A673 (cell line): ENCODE measurements at regions of chr5 and their contacts with region 1.

Region 1: GRCh38 chr5:5419294-5420210 is 2.9 kb upstream of the ICE1 start:
- DNase-seq: peak; percentile 71
- H3K4me3 ChIP-seq: no peak overlapping the region
- H3K27ac ChIP-seq: no peak overlapping the region
- H3K4me1 ChIP-seq: peaks cover 7% of the 10 kb centered on the region
- H3K27me3 ChIP-seq: no peaks in the 10 kb centered on the region
- CTCF ChIP-seq: peak; percentile 85

Region 2: GRCh38 chr5:4868109-4868735 is 551.3 kb before region 1 on chr5:
- CTCF ChIA-PET with region 1: interaction called, 3 read pairs
- POLR2A ChIA-PET with region 1: no interaction called
- intact Hi-C with region 1: loop called (anchors 1 kb)
- DNase-seq: peak; percentile 66
- H3K4me3 ChIP-seq: no peak overlapping the region
- H3K27ac ChIP-seq: no peak overlapping the region
- H3K4me1 ChIP-seq: no peaks in the 10 kb centered on the region
- H3K27me3 ChIP-seq: peaks cover 23% of the 10 kb centered on the region
- CTCF ChIP-seq: peak; percentile 88

Region 3: DNA sequence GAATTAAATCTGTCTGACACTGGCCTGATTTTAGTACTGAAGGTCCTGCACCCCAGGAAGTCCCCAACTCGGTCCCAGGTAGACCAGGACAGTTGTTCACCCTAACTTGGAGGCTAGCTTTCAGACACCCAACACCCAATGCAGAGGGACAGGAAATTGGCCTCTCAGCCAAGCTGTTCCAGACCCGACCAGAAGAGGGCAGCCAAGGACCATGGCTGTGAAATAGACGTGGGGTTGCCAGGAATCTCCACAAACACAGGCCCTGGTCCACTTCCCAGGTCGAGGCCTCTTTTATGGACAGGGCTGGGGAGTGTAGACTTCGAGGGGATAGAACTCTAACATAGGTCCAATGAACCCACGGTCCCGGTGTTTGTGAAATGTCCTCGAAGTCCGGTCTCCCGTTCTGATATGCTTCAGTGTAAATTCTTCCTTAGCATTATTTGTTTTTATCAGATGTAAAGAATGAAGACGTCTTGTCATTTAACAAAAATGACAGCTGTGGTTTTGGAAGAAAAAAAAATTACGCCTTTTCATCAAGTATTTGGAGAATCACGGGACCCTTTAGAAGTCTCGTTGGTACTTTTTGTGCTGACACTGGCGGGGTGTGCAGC is 539.8 kb before region 1 on chr5:
- CTCF ChIA-PET with region 1: interaction called, 3 read pairs
- POLR2A ChIA-PET with region 1: no interaction called
- intact Hi-C with region 1: loop called (anchors 1 kb)
- DNase-seq: peak; percentile 68
- H3K4me3 ChIP-seq: no peak overlapping the region
- H3K27ac ChIP-seq: no peak overlapping the region
- H3K4me1 ChIP-seq: no peaks in the 10 kb centered on the region
- H3K27me3 ChIP-seq: peaks cover 11% of the 10 kb centered on the region
- CTCF ChIP-seq: peak; percentile 89

Region 4: GRCh38 chr5:5079876-5080275 is 339.7 kb before region 1 on chr5:
- CTCF ChIA-PET with region 1: interaction called, 11 read pairs
- POLR2A ChIA-PET with region 1: no interaction called
- intact Hi-C with region 1: no loop called
- DNase-seq: no peak
- H3K4me3 ChIP-seq: no peak overlapping the region
- H3K27ac ChIP-seq: no peak overlapping the region
- H3K4me1 ChIP-seq: no peaks in the 10 kb centered on the region
- H3K27me3 ChIP-seq: peaks cover 80% of the 10 kb centered on the region
- CTCF ChIP-seq: no peak

Region 5: DNA sequence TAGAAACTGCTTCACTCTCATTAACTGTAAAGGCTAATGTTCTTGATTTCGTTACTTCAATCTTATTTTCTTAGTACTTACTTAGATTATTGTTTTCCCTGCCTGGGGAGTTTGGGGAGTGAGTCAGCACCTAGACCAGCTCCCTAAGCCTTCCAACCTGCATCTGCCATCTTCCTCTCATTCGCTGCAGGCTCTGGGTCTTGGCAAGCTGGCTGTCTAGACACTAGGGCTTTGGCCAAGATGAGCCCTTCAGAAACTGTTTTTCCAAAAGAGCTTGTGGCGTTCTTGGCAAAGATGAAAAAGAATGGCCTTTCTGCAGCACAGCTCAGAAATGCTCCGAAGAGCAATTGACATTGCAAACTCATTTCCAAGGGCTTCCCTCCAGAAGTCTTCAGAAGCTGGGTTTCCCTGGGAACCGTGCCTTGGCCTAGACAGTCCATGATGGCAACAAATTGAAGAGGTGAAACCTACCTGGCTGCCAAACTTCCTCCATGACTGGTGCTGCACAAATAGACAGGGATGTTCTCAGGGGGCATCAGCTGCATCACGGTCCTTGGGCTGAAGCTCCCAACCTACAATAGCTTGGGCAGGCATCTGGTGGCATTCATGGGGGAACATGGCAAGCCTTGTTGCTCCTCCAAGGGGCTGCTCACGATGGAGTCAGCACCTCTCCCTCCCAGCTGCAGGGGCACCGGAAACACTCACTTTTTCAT is 1136.7 kb after region 1 on chr5:
- CTCF ChIA-PET with region 1: no interaction called
- POLR2A ChIA-PET with region 1: no interaction called
- intact Hi-C with region 1: no loop called
- DNase-seq: no peak
- H3K4me3 ChIP-seq: no peak overlapping the region
- H3K27ac ChIP-seq: no peak overlapping the region
- H3K4me1 ChIP-seq: no peaks in the 10 kb centered on the region
- H3K27me3 ChIP-seq: no peaks in the 10 kb centered on the region
- CTCF ChIP-seq: no peak